Calu3 (cell line): ENCODE measurements at regions of chr12 and their contacts with region 1.

Region 1: DNA sequence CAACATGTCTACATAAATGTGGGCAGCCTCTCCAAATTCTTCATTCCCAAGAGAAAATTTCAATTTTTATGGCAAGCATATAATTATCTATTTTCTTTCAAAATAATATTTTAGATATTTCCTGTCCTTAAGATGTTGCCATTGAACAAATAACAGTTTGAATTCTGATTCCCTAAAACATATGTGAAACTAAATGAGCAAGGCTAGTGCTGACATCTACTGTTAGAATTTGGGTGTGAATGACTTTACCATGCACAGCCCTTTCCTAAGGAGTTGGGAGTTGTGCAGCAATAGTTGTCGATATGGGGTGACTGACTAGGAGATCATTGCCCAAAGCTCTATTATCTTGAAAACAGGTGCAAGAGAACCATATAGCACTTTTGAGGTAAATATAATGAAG is 108.2 kb upstream of the SLC38A4 start:
- DNase-seq: peak; percentile 10
- H3K4me3 Mint-ChIP-seq: no peak overlapping the region
- H3K27ac Mint-ChIP-seq: no peak overlapping the region
- H3K4me1 Mint-ChIP-seq: peaks cover 10% of the 10 kb centered on the region
- H3K27me3 Mint-ChIP-seq: no peaks in the 10 kb centered on the region
- CTCF ChIP-seq: no peak

Region 2: GRCh38 chr12:46153268-46153872 is 780.6 kb before region 1 on chr12:
- CTCF ChIA-PET with region 1: no interaction called
- intact Hi-C with region 1: loop called (anchors 10 kb)
- DNase-seq: no peak
- H3K4me3 Mint-ChIP-seq: no peak overlapping the region
- H3K27ac Mint-ChIP-seq: no peak overlapping the region
- H3K4me1 Mint-ChIP-seq: peaks cover 8% of the 10 kb centered on the region
- H3K27me3 Mint-ChIP-seq: no peaks in the 10 kb centered on the region
- CTCF ChIP-seq: peak; percentile 27

Region 3: DNA sequence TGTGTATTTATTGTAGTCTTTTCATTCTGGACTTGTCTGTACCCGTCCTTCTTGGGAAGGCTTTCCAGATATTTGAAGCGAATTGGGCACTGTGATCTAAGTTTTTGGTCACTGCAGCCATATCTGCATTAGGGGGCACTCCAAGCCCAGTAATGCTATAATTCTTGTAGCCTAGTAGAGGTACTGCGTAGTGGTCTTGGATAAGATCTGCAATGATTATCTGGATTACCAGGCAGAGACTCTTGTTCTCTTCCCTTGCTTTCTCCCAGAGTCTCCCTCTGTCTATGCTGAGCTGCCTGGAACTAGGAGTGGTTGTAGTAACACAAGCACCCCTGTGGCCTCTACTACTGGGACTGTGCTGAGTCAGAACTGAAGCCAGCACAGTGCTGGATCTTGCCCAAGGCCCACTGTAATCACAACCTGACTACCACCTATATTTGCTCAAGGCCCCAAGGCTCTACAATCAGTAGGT is 591.3 kb before region 1 on chr12:
- CTCF ChIA-PET with region 1: no interaction called
- intact Hi-C with region 1: loop called (anchors 1 kb)
- DNase-seq: peak; percentile 23
- H3K4me3 Mint-ChIP-seq: no peak overlapping the region
- H3K27ac Mint-ChIP-seq: peak overlapping the region; percentile 15
- H3K4me1 Mint-ChIP-seq: peaks cover 17% of the 10 kb centered on the region
- H3K27me3 Mint-ChIP-seq: no peaks in the 10 kb centered on the region
- CTCF ChIP-seq: peak; percentile 30

Region 4: GRCh38 chr12:46915082-46915481 is 18.9 kb before region 1 on chr12:
- CTCF ChIA-PET with region 1: no interaction called
- intact Hi-C with region 1: no loop called
- DNase-seq: no peak
- H3K4me3 Mint-ChIP-seq: no peak overlapping the region
- H3K27ac Mint-ChIP-seq: no peak overlapping the region
- H3K4me1 Mint-ChIP-seq: no peaks in the 10 kb centered on the region
- H3K27me3 Mint-ChIP-seq: no peaks in the 10 kb centered on the region
- CTCF ChIP-seq: no peak